ENCODE measurements at regions of chr17 and their contacts with region 1.

Region 1: GRCh38 chr17:47949136-47949759 is 7.9 kb downstream of the PNPO start:
- DNase-seq: peak; percentile 87
- H3K4me3 Mint-ChIP-seq: peak overlapping the region; percentile 51
- H3K27ac Mint-ChIP-seq: peak overlapping the region; percentile 63
- H3K4me1 Mint-ChIP-seq: peaks cover 28% of the 10 kb centered on the region
- H3K27me3 Mint-ChIP-seq: no peaks in the 10 kb centered on the region

Region 2: GRCh38 chr17:47872021-47872650 is 77.1 kb before region 1 on chr17:
- CTCF ChIA-PET with region 1: no interaction called
- POLR2A ChIA-PET with region 1: no interaction called
- intact Hi-C with region 1: no loop called
- DNase-seq: no peak
- H3K4me3 Mint-ChIP-seq: no peak overlapping the region
- H3K27ac Mint-ChIP-seq: no peak overlapping the region
- H3K4me1 Mint-ChIP-seq: no peaks in the 10 kb centered on the region
- H3K27me3 Mint-ChIP-seq: peaks cover 28% of the 10 kb centered on the region

Region 3: DNA sequence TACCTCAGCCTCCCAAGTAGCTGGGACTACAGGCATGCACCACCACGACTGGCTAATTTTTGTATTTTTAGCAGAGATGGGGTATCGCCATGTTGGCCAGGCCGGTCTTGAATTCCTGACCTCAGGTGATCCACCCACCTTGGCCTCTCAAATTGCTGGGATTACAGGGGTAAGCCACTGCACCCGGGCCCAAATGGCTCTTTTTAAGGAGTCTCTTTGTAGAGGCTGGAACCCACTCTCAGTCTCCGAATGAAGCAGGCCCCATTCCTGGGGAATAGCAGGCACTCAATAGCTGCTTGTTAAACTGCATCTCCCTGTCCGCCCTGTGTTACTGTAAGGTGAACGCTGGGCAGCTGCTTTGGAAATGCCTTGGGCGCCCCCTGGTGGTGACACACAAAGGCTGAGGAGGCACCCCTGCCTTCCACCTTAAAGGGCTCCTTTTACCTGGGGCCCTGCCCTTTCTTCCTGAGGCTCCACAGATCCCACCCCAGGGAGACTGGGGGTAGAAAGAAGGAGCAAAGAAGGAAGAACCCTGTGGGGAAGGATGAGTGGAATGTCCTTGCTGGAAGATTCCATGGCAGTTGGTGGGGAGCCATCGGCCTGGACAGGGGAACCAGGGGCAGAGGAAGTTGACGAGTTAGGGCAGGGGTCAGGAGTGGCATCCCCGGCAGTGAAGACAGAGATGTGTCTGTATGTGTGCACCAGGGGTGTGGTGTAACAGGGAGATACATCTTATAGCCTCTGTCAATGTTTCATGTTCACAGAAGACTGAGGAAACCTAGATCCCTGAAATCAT is 59.3 kb before region 1 on chr17:
- CTCF ChIA-PET with region 1: interaction called, 17 read pairs
- POLR2A ChIA-PET with region 1: interaction called, 4 read pairs
- intact Hi-C with region 1: no loop called
- DNase-seq: peak; percentile 94
- H3K4me3 Mint-ChIP-seq: no peak overlapping the region
- H3K27ac Mint-ChIP-seq: no peak overlapping the region
- H3K4me1 Mint-ChIP-seq: peaks cover 17% of the 10 kb centered on the region
- H3K27me3 Mint-ChIP-seq: no peaks in the 10 kb centered on the region

Region 4: GRCh38 chr17:47935961-47936360 is 13.3 kb before region 1 on chr17:
- CTCF ChIA-PET with region 1: interaction called, 52 read pairs
- POLR2A ChIA-PET with region 1: no interaction called
- intact Hi-C with region 1: no loop called
- DNase-seq: no peak
- H3K4me3 Mint-ChIP-seq: no peak overlapping the region
- H3K27ac Mint-ChIP-seq: no peak overlapping the region
- H3K4me1 Mint-ChIP-seq: peaks cover 21% of the 10 kb centered on the region
- H3K27me3 Mint-ChIP-seq: no peaks in the 10 kb centered on the region

Region 5: DNA sequence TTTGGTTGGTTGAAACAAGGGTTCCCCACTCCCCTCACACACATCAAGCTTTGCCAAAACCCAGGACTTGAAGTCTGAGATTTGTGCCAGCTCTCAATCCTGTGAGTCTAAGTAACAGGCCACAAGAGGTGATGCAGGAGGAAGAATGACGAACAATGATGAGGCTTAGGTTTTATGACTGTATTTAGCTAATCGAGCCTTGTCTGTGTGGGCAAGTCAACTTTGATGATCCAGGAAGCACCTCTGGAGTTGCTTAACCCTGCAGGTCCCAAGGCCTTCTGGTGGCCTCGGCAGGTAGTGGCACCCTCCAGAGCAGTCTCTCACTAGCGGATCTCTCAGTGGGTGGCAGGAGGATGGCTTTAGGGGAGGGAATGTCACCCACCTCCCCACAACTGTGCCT is 50.3 kb after region 1 on chr17:
- CTCF ChIA-PET with region 1: interaction called, 11 read pairs
- POLR2A ChIA-PET with region 1: no interaction called
- intact Hi-C with region 1: no loop called
- DNase-seq: peak; percentile 32
- H3K4me3 Mint-ChIP-seq: no peak overlapping the region
- H3K27ac Mint-ChIP-seq: no peak overlapping the region
- H3K4me1 Mint-ChIP-seq: peaks cover 3% of the 10 kb centered on the region
- H3K27me3 Mint-ChIP-seq: peaks cover 6% of the 10 kb centered on the region

Region 6: DNA sequence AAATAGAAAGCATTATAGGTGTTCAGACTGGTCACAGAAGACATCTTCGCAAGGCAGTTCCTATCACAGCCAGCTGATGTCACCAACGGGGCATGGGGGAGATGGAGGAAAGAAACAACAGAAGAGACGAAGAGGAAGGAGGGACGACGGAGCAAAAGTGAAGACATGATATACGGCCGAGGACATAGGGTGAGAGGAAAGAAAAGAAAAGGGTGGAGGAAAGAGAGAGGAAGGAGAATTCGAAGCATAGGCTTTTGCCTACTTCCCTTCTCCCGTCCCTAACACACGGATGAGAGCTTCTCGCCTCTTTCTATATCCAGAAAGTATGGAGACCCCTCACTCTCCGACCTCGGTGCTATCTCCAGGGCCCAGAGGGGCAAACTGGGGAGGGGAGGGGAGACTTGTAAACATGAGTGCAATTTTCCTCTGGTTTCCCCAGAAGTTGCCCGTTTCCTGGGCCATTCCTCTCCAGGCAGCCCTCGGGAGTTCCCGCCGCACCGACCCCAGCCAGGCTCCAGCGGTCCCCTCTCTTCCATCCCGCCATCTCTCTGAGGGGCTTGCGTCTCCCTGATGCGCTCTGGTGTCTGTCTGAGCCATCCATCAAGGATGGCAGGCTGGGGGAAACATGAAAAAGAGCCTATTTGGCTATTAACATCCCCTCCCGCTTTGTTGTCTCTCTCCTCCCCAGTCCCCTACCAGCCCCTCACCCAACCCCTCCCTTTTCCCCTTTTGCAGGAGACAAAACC is 62.3 kb after region 1 on chr17:
- CTCF ChIA-PET with region 1: interaction called, 10 read pairs
- POLR2A ChIA-PET with region 1: no interaction called
- intact Hi-C with region 1: no loop called
- DNase-seq: peak; percentile 67
- H3K4me3 Mint-ChIP-seq: peak overlapping the region; percentile 66
- H3K27ac Mint-ChIP-seq: no peak overlapping the region
- H3K4me1 Mint-ChIP-seq: peaks cover 13% of the 10 kb centered on the region
- H3K27me3 Mint-ChIP-seq: peaks cover 45% of the 10 kb centered on the region

Measured in activated CD4-positive, alpha-beta memory T cell treated with anti-CD3 and anti-CD28 coated beads for 36 hours (primary cell).